ENCODE measurements at regions of chr1 and their contacts with region 1.

Region 1: DNA sequence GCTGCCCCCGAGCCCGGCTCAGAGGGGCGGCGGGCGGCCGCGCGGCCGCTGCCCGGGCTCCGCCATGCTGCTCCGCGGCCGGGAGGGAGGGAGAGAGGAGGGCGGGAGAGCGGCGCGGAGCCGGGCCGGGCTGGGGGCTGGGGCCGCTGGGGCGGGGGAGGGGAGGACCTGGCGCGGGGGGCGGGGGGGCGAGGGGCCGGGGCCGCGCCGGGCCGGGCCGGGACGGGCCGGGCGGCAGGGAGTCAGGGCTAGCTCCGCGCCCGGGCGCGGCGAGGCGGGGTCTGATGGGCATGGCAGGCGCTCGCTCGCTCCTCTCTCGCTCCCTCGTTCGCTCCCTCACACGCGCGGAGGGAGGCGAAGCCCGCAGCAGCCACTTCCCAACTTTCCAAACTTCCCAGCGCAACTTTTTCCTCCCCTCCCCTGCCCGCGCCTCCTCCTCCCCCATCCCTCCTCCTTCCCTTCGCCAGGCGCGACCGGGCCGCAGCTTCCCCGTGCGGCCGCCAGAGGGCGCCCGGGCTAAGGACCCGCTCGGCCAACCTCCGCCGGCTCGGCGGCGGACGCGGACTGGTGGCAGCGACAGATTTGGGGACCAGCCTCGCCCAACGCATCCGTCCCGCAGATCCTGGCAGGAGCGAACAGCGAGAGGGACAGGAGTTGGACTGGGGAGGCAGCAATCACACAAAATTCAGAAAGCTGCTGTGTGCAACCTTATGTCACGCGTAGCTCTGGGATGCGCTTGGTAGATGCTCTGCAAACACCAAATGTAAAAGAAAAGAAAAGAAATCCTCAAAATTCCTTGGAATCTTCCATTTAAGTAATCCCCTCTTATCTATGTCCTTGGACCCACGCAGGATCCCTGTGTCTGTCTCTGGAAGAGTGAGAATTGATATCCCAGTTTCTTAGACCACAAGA is at the start of gene TRABD2B:
- DNase-seq: peak; percentile 71
- ATAC-seq: peak; percentile 82
- H3K4me3 ChIP-seq: peak within 1 kb of the TSS in 3 of 5 experiments; percentile 38 to 40 (median 39)
- H3K4me3 Mint-ChIP-seq: peak within 1 kb of the TSS; percentile 80
- H3K27ac ChIP-seq: no peak within 1 kb of the TSS
- H3K27ac Mint-ChIP-seq: no peak within 1 kb of the TSS
- H3K4me1 ChIP-seq: peaks cover 6% of the 10 kb centered on the region in 2 donors
- H3K4me1 Mint-ChIP-seq: peaks cover 11% of the 10 kb centered on the region
- H3K27me3 ChIP-seq: peaks cover 0 to 30% (median 21%) of the 10 kb centered on the region in 4 experiments
- H3K27me3 Mint-ChIP-seq: peaks cover 54% of the 10 kb centered on the region
- CTCF ChIP-seq: peak; percentile 92
- total RNA-seq, gene TRABD2B: not detected in 2 replicates

Region 2: DNA sequence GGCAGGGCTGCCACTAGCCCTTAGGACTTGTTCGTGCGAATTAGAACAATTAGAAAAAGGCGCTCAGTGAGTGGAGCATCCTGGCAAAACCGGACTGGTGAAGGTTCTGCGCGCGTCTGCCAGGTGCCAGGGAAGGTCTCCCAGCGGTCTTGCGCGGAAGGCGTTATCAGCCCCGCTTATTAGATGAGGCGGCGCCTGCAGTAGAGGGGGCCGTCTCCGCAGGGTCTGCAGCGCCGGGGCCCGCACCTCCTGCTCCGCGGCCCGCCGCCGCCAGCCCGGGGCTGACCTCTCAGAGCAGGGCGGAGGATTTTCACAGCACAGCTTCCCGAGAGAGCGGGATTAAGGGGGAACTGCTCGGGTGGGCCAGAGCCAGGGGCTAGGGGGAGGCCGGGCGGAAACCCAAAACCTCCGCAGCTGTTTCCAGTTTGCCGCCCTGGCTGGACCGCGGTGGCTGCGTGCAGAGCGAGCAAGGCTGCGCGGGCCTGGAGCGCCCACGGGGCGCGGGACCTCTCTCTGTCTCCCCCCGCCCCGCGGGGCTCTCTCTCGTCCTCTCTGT is 404.5 kb before region 1 on chr1:
- CTCF ChIA-PET with region 1: no interaction called
- POLR2A ChIA-PET with region 1: no interaction called
- intact Hi-C with region 1: no loop called
- DNase-seq: no peak
- ATAC-seq: no peak
- H3K4me3 ChIP-seq: no peak overlapping the region
- H3K4me3 Mint-ChIP-seq: no peak overlapping the region
- H3K27ac ChIP-seq: no peak overlapping the region
- H3K27ac Mint-ChIP-seq: no peak overlapping the region
- H3K4me1 ChIP-seq: no peaks in the 10 kb centered on the region
- H3K4me1 Mint-ChIP-seq: peaks cover 2% of the 10 kb centered on the region
- H3K27me3 ChIP-seq: peaks cover 0 to 26% (median 10%) of the 10 kb centered on the region in 4 experiments
- H3K27me3 Mint-ChIP-seq: peaks cover 22% of the 10 kb centered on the region
- CTCF ChIP-seq: no peak

Region 3: DNA sequence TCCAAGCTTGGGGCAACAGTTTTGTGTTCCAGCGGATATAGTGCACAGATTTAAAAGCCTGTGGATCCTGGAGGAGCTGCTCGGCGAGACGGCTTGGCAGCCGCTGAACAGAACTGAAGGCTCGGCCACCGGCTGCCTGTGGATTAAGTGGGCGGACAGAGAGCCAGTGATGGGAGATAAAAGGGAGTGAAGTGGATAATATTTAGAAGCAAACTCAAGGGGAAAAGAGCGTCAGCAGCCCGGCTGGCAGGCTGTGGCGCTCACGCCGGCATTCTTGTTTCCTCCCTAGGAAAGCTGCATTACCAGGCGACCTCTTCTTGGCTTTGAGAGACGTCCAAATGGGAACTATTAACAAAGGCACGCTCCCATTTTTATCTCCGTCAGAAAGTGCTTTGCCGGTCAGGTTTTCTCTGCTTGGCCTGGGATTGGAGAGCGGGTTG is 10.8 kb before region 1 on chr1:
- CTCF ChIA-PET with region 1: interaction called, 11 read pairs
- POLR2A ChIA-PET with region 1: no interaction called
- intact Hi-C with region 1: no loop called
- DNase-seq: no peak
- ATAC-seq: no peak
- H3K4me3 ChIP-seq: no peak overlapping the region
- H3K4me3 Mint-ChIP-seq: no peak overlapping the region
- H3K27ac ChIP-seq: no peak overlapping the region
- H3K27ac Mint-ChIP-seq: no peak overlapping the region
- H3K4me1 ChIP-seq: no peaks in the 10 kb centered on the region
- H3K4me1 Mint-ChIP-seq: peaks cover 3% of the 10 kb centered on the region
- H3K27me3 ChIP-seq: peaks cover 0 to 24% (median 8%) of the 10 kb centered on the region in 4 experiments
- H3K27me3 Mint-ChIP-seq: peaks cover 61% of the 10 kb centered on the region
- CTCF ChIP-seq: no peak

Region 4: GRCh38 chr1:48596046-48596445 is 598.5 kb after region 1 on chr1:
- CTCF ChIA-PET with region 1: no interaction called
- POLR2A ChIA-PET with region 1: no interaction called
- intact Hi-C with region 1: no loop called
- DNase-seq: no peak
- ATAC-seq: no peak
- H3K4me3 ChIP-seq: no peak overlapping the region
- H3K4me3 Mint-ChIP-seq: no peak overlapping the region
- H3K27ac ChIP-seq: no peak overlapping the region
- H3K27ac Mint-ChIP-seq: no peak overlapping the region
- H3K4me1 ChIP-seq: no peaks in the 10 kb centered on the region
- H3K4me1 Mint-ChIP-seq: no peaks in the 10 kb centered on the region
- H3K27me3 ChIP-seq: no peaks in the 10 kb centered on the region
- H3K27me3 Mint-ChIP-seq: peaks cover 12% of the 10 kb centered on the region
- CTCF ChIP-seq: no peak

Measured in B cell (primary cell).